ENCODE measurements at regions of chr11 and their contacts with region 1.

Region 1: DNA sequence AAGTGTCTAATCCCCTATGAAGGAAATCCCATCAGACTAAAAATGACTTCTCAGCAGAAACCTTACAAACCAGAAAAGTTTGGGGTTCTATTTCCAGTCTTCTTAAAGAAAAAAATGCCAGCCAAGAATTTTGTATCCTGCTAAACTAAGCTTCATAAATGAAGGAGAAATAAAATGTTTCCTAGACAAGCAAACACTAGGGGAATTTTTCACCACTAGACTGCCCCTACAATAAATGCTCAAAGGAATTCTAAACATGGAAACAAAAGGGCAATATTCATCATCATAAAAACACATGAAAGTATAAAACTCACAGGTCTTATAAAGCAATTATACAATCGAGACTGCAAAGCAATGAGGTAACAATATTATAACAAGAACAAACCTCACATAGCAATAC is 124.3 kb downstream of the PLEKHA7 start:
- DNase-seq: no peak

Region 2: GRCh38 chr11:15865212-15865987 is 1024.5 kb before region 1 on chr11:
- intact Hi-C with region 1: no loop called
- DNase-seq: no peak

Region 3: GRCh38 chr11:16326679-16327297 is 563.1 kb before region 1 on chr11:
- intact Hi-C with region 1: no loop called
- DNase-seq: no peak

Region 4: DNA sequence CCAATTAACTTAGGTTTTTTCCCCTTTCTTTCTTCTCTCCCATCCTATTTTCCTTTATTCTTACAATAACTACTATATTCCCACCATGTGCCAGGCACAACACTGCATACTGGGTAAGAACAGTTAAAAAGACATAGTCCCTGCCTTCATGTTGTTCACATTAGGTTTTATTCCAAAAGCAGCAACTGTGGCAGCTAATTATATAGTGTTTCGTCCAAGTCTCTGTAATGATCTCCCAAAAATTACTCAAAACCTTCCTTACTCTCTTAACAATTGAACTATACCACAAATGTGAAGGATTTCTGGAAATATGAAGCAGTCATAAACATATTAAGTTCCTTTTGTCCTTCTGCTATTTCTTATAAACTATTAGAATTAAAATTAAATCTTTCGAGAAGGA is 335.5 kb before region 1 on chr11:
- intact Hi-C with region 1: no loop called
- DNase-seq: no peak

Region 5: DNA sequence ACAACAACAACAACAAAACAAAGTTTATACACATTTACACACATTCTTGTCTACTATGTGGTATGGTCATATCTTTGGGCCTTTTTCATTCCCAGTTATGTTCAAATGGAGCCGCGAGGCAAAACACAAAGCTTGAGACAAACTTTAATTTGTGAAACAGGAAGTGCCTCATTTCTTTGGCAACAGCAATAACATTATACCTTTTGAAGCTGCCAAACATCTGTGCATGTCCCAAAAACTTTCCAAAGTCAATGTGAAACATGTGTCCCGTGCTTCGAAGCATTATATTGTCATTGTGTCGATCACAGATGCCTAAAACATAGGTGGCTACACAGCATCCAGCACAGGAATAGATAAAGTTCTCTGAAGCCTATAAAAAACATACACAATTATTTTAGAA is 212.6 kb after region 1 on chr11:
- intact Hi-C with region 1: loop called in 1 of 2 experiments (anchors 5 kb)
- DNase-seq: no peak

Measured in posterior vena cava (tissue), 2 donors.